Colonic mucosa (tissue), 4 donors: ENCODE measurements at regions of chr14 and their contacts with region 1.

Region 1: GRCh38 chr14:105527661-105528581 is 1.5 kb downstream of the TMEM121 start:
- DNase-seq: peak; percentile 79
- H3K4me3 ChIP-seq: peak overlapping the region; percentile 54
- H3K27ac ChIP-seq: no peak overlapping the region
- H3K4me1 ChIP-seq: peaks cover 16% of the 10 kb centered on the region
- H3K27me3 ChIP-seq: peaks cover 32% of the 10 kb centered on the region
- CTCF ChIP-seq: peak; percentile 74

Region 2: GRCh38 chr14:105203057-105203531 is 324.8 kb before region 1 on chr14:
- intact Hi-C with region 1: loop called (anchors 10 kb)
- DNase-seq: peak; percentile 76
- H3K4me3 ChIP-seq: no peak overlapping the region
- H3K27ac ChIP-seq: no peak overlapping the region
- H3K4me1 ChIP-seq: peaks cover 5% of the 10 kb centered on the region
- H3K27me3 ChIP-seq: peaks cover 18% of the 10 kb centered on the region
- CTCF ChIP-seq: peak; percentile 92

Region 3: DNA sequence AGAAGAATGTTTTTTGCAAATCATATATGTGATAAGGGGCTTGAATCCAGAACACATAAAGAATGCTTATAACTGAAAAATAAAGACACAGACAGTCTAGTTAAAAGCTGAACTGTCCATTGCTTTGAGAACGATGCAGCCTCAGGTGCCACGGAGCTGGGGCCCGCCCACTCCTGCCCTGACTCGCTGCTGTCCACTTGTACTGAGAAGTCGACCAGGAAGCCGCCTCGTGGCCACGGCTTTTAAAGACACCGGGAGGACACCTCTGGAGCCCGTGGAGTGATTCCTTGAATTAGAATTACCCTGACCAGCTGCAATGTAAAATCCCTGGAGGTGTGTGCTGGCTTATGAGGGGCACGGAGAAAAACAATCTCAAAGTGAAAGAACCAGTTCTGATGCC is 153.5 kb before region 1 on chr14:
- intact Hi-C with region 1: loop called (anchors 5 kb)
- DNase-seq: no peak
- H3K4me3 ChIP-seq: no peak overlapping the region
- H3K27ac ChIP-seq: no peak overlapping the region
- H3K4me1 ChIP-seq: no peaks in the 10 kb centered on the region
- H3K27me3 ChIP-seq: no peaks in the 10 kb centered on the region
- CTCF ChIP-seq: no peak

Region 4: DNA sequence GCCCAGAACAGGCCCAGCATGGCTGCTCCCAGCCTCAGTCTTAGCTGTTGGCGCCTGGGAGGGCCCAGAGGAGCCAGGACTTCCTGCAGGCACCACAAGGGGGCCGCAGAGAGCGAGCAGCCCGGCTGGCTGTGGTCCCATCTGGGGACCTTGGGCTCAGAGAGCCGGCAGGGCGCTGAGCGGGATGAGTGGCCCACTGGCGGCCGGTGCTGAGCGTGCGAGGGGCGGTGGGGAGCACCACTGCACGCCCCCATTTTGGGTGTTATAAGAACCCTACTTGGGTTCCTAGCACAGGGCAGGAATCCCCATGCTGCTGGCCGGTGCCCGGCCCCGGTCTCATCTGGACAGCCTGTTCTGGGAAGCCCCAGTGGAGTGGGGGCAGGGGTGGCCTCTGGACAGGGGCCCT is 79.2 kb before region 1 on chr14:
- intact Hi-C with region 1: loop called (anchors 10 kb)
- DNase-seq: peak; percentile 59
- H3K4me3 ChIP-seq: no peak overlapping the region
- H3K27ac ChIP-seq: no peak overlapping the region
- H3K4me1 ChIP-seq: no peaks in the 10 kb centered on the region
- H3K27me3 ChIP-seq: no peaks in the 10 kb centered on the region
- CTCF ChIP-seq: peak; percentile 87

Region 5: GRCh38 chr14:105490572-105491366 is 37.2 kb before region 1 on chr14 and contains the start of gene TEDC1:
- intact Hi-C with region 1: loop called (anchors 5 kb)
- DNase-seq: peak; percentile 99
- H3K4me3 ChIP-seq: peak within 1 kb of the TSS; percentile 91
- H3K27ac ChIP-seq: peak within 1 kb of the TSS; percentile 96
- H3K4me1 ChIP-seq: peaks cover 17% of the 10 kb centered on the region
- H3K27me3 ChIP-seq: peaks cover 12% of the 10 kb centered on the region
- CTCF ChIP-seq: peak; percentile 61
- total RNA-seq, gene TEDC1: 15.0 to 55.7 TPM